ENCODE measurements at regions of chr1 and their contacts with region 1.

Region 1: GRCh38 chr1:186605762-186606350 is 74.4 kb downstream of the PTGS2 start:
- DNase-seq: peak; percentile 11
- H3K4me3 ChIP-seq: no peak overlapping the region
- H3K27ac ChIP-seq: no peak overlapping the region
- H3K27me3 ChIP-seq: no peaks in the 10 kb centered on the region
- CTCF ChIP-seq: peak; percentile 86

Region 2: DNA sequence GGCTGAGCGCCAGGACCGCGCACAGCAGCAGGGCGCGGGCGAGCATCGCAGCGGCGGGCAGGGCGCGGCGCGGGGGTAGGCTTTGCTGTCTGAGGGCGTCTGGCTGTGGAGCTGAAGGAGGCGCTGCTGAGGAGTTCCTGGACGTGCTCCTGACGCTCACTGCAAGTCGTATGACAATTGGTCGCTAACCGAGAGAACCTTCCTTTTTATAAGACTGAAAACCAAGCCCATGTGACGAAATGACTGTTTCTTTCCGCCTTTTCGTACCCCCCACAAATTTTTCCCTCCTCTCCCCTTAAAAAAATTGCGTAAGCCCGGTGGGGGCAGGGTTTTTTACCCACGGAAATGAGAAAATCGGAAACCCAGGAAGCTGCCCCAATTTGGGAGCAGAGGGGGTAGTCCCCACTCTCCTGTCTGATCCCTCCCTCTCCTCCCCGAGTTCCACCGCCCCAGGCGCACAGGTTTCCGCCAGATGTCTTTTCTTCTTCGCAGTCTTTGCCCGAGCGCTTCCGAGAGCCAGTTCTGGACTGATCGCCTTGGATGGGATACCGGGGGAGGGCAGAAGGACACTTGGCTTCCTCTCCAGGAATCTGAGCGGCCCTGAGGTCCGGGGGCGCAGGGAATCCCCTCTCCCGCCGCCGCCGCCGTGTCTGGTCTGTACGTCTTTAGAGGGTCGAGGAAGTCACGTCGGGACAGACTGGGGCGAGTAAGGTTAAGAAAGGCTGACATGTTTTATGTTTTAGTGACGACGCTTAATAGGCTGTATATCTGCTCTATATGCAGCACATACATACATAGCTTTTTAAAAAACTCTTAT is 74.6 kb after region 1 on chr1 and contains the start of gene PTGS2:
- CTCF ChIA-PET with region 1: interaction called, 15 read pairs
- POLR2A ChIA-PET with region 1: no interaction called
- DNase-seq: peak; percentile 69
- H3K4me3 ChIP-seq: peak within 1 kb of the TSS; percentile 71
- H3K27ac ChIP-seq: peak within 1 kb of the TSS; percentile 71
- H3K27me3 ChIP-seq: no peaks in the 10 kb centered on the region
- CTCF ChIP-seq: peak; percentile 71
- polyA plus RNA-seq, gene PTGS2: 2.1 and 2.7 TPM in 2 replicates

Region 3: DNA sequence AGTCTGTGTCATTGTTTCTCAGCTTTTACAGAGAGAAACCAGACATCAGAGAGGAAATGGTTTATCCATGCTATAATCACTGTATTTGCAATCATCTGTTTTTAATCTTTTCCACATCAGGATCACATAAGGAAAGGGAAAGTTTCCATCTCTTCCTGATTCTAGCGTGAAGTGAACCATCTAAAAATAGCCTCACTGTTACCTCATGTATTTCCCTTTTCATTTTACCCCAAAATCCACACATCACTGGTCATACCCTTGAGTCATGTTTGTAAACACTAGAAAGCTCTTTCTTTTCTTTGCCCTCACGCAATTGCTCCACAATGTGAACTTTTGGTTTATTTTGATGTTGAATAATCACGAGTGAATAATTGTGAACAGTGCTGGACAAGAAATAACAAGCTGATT is 368.9 kb after region 1 on chr1:
- CTCF ChIA-PET with region 1: interaction called, 10 read pairs
- POLR2A ChIA-PET with region 1: no interaction called
- DNase-seq: peak; percentile 88
- H3K4me3 ChIP-seq: no peak overlapping the region
- H3K27ac ChIP-seq: no peak overlapping the region
- H3K27me3 ChIP-seq: no peaks in the 10 kb centered on the region
- CTCF ChIP-seq: no peak